ENCODE measurements at regions of chr14 and their contacts with region 1.

Region 1: GRCh38 chr14:56280843-56281242 is 162.6 kb downstream of the PELI2 start:
- DNase-seq: no peak
- H3K4me3 ChIP-seq: no peak overlapping the region
- H3K27ac ChIP-seq: no peak overlapping the region
- H3K4me1 ChIP-seq: no peaks in the 10 kb centered on the region
- H3K27me3 ChIP-seq: no peaks in the 10 kb centered on the region
- CTCF ChIP-seq: peak in 1 of 5 experiments; percentile 7
- EP300 ChIP-seq: no peak
- POLR2A ChIP-seq: no peak

Region 2: DNA sequence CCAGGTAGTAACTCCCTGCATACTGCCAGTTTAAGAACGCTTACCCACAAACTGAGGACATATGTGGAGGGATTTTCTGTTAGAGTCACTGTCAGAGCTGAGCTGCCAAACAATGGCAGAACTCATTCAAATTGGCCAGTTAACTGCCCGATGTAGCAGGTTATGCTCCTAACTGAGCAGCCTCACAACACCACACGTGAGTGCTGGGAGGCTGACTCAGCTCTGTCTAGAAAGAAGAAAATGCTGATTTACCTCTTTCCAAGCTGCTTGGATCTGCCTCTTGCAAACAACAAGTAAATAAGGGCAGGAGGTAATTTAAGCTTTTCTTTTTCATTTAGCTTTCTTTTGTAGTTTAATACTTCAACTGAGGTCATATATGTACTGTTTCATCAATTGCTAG is 32.9 kb after region 1 on chr14:
- in situ Hi-C with region 1: no loop called
- intact Hi-C with region 1: loop called (anchors 2 kb)
- DNase-seq: no peak
- H3K4me3 ChIP-seq: no peak overlapping the region
- H3K27ac ChIP-seq: no peak overlapping the region
- H3K4me1 ChIP-seq: no peaks in the 10 kb centered on the region
- H3K27me3 ChIP-seq: no peaks in the 10 kb centered on the region
- CTCF ChIP-seq: no peak
- EP300 ChIP-seq: no peak
- POLR2A ChIP-seq: no peak